A549 (cell line): ENCODE measurements at regions of chr2 and their contacts with region 1.

Region 1: DNA sequence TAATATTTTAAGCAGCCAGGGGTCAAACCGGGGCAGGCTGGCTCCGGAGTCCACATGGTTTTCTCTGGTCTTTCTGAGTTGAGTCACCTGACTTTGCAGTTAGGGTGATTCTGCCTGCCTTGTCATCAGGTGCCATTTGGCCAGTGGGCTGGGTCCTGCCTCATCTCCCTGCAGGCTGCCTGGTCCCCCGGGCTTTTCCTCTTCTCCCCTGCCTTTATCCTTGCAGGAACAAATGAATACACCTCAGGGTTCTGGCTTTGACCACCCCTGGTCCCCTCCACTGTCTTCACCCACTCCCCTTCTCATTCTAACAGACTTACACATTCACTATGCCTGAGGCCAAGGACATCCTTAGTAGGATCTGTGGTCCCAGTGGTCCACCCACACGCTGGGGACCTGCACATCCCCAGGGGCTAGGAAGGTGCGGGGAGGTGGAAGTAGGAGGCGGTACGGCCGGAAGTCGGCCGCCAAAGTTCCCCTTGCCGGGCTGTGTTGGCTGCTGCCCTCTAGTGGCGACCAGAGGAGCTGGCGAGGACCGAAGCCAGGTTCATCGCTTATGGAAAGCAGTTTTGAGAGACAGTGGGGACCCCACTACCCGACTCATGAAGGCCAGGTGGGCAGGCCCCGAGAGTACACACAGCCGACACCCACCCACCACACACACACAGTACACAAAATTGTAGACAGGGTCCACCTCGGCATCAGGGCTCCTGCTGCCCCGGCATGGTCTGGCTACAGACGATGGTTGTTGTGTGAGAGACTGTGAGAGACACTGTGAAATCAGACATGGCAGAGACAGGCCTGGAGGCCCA is 6.3 kb upstream of the TEX261 start:
- DNase-seq: peak; percentile 59 to 80
- ATAC-seq: peak; percentile 86 to 93
- H3K4me3 ChIP-seq: peak overlapping the region; percentile 42
- H3K27ac ChIP-seq: peak overlapping the region; percentile 64 to 83
- H3K4me1 ChIP-seq: peaks cover 5% of the 10 kb centered on the region; the same call in 1 of the 3 replicates
- CTCF ChIP-seq: peak; percentile 94
- EP300 ChIP-seq: no peak
- POLR2A ChIP-seq: peak; percentile 25; the same call in 1 of the 2 replicates
- RAD21 ChIP-seq: peak; percentile 41 to 43; a peak in 4 of 5 replicates

Region 2: DNA sequence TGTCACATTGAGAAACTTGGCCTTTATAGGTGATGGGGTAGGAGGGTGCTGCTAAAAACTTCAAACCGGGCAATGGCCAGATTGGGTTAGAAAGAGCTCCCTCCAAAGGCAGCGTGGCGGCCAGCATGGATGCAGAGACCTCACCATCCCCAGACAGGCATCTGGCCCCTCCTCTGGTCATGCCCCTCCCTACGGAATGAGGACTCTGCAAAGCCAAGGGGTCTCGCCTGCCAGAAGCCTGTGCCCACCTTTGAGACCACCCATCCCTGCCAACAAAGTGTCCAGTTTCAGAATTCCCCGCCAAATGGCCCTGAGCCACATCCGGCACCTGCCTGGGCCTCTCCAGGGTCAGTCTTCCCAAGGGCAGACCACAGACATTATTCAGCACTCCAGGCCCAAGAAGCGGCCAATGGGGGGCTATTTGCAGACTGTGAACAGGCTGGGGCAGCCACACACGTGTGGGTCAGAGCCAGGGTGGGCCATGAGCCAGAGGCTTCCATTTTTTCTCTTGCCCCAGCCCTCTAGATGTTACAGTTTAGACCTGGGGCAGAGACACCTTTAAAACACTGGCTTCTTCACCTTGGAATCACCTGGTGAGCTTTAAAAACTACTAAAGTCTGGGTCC is 69.5 kb before region 1 on chr2:
- CTCF ChIA-PET with region 1: no interaction called
- POLR2A ChIA-PET with region 1: no interaction called
- DNase-seq: no peak
- ATAC-seq: no peak
- H3K4me3 ChIP-seq: no peak overlapping the region
- H3K27ac ChIP-seq: no peak overlapping the region
- H3K4me1 ChIP-seq: no peaks in the 10 kb centered on the region
- CTCF ChIP-seq: no peak
- EP300 ChIP-seq: no peak
- POLR2A ChIP-seq: no peak
- RAD21 ChIP-seq: no peak

Region 3: GRCh38 chr2:70984576-70985282 is 16.3 kb before region 1 on chr2:
- CTCF ChIA-PET with region 1: interaction called, 37 read pairs
- POLR2A ChIA-PET with region 1: no interaction called
- DNase-seq: peak; percentile 67 to 79
- ATAC-seq: peak; percentile 87 to 98
- H3K4me3 ChIP-seq: no peak overlapping the region
- H3K27ac ChIP-seq: no peak overlapping the region
- H3K4me1 ChIP-seq: no peaks in the 10 kb centered on the region
- CTCF ChIP-seq: peak; percentile 67
- EP300 ChIP-seq: no peak
- POLR2A ChIP-seq: no peak
- RAD21 ChIP-seq: peak in 1 of 2 experiments; percentile 20; a peak in 1 of 5 replicates

Region 4: DNA sequence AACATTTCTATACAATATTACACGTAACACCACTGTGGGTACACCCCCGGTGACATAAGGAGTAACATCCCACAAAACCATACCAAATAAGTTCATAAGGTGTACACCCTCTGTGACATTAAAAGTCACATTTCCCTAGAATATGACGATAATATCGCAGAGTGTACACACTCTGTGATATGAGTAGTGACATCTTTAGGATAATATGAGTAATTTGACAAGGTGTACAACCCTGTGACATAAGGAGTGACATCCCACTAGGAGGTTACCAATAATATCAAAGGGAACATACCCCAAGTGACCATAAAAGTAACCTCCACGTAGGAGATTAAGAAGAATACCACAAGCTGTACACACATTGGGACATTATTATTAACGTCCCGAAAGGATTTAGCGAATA is 17.6 kb after region 1 on chr2:
- CTCF ChIA-PET with region 1: interaction called, 20 read pairs
- POLR2A ChIA-PET with region 1: no interaction called
- DNase-seq: no peak
- ATAC-seq: no peak
- H3K4me3 ChIP-seq: no peak overlapping the region
- H3K27ac ChIP-seq: no peak overlapping the region
- H3K4me1 ChIP-seq: no peaks in the 10 kb centered on the region
- CTCF ChIP-seq: no peak
- EP300 ChIP-seq: no peak
- POLR2A ChIP-seq: no peak
- RAD21 ChIP-seq: no peak

Region 5: DNA sequence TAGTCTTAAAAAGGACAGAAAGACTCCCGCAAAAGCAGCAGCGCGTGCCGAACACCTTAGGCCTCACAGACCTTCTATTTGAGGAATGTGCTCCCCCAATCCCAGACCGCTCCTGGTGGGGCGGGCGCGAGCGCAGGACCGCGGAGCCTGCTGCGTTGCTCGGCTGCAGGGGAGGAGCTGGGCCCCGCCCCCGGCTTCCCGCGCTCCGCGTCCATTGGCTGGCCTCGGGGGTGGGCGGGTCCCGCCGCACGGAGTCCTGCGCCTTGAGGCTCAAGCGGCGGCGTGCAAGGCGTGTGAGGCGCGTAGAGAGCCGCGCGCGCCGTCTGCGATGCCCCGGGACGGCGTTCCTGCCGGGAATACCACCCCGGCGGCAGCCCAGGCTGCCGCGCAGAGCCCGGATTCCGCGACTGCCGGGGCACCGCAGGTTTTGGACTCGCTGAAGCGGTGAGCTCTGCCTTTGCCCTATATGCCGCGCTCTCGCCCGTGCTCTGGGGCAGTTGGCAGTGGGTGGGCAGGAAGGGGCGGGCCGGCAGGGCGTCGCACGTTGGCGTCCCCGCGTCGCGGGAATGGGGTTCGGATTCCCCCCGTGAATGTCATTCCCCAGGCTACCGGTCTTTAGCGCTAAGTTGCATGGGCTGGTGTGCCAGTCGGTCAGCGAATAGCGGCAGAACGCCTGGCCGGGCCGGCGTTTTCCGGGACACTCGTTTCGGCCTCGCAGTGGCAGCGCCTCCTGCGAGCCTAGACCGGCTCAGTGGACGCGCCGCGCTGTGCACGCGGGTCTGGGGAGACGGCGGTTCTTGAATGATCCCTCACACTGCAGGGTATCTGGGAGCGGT is 275.5 kb after region 1 on chr2:
- CTCF ChIA-PET with region 1: no interaction called
- POLR2A ChIA-PET with region 1: no interaction called
- DNase-seq: peak; percentile 89 to 93
- ATAC-seq: peak; percentile 96 to 98
- H3K4me3 ChIP-seq: peak overlapping the region; percentile 50
- H3K27ac ChIP-seq: peak overlapping the region; percentile 64 to 83
- H3K4me1 ChIP-seq: peaks cover 5% of the 10 kb centered on the region; the same call in 1 of the 3 replicates
- CTCF ChIP-seq: no peak
- EP300 ChIP-seq: no peak
- POLR2A ChIP-seq: peak; percentile 75
- RAD21 ChIP-seq: no peak

Region 6: GRCh38 chr2:71477231-71477691 is 476.3 kb after region 1 on chr2:
- CTCF ChIA-PET with region 1: no interaction called
- POLR2A ChIA-PET with region 1: no interaction called
- DNase-seq: no peak
- ATAC-seq: no peak
- H3K4me3 ChIP-seq: no peak overlapping the region
- H3K27ac ChIP-seq: no peak overlapping the region
- H3K4me1 ChIP-seq: no peaks in the 10 kb centered on the region
- CTCF ChIP-seq: no peak
- EP300 ChIP-seq: no peak
- POLR2A ChIP-seq: no peak
- RAD21 ChIP-seq: no peak